HCT116 (cell line): ENCODE measurements at regions of chr3 and their contacts with region 1.

Region 1: GRCh38 chr3:192444096-192444790 is 283.1 kb downstream of the FGF12 start:
- DNase-seq: peak; percentile 36
- ATAC-seq: peak; percentile 92
- H3K4me3 ChIP-seq: no peak overlapping the region
- H3K27ac ChIP-seq: no peak overlapping the region
- H3K4me1 ChIP-seq: no peaks in the 10 kb centered on the region
- H3K27me3 ChIP-seq: peaks cover 64% of the 10 kb centered on the region
- CTCF ChIP-seq: peak; percentile 71 to 99 (median 93)
- POLR2A ChIP-seq: no peak
- RAD21 ChIP-seq: peak; percentile 93

Region 2: GRCh38 chr3:191244242-191244867 is 1199.9 kb before region 1 on chr3:
- CTCF ChIA-PET with region 1: interaction called, 4 read pairs
- POLR2A ChIA-PET with region 1: no interaction called
- RAD21 ChIA-PET with region 1: no interaction called
- intact Hi-C with region 1: loop called (anchors 10 kb)
- DNase-seq: no peak
- ATAC-seq: no peak
- H3K4me3 ChIP-seq: no peak overlapping the region
- H3K27ac ChIP-seq: no peak overlapping the region
- H3K4me1 ChIP-seq: peaks cover 7 to 20% of the 10 kb centered on the region in 2 experiments
- H3K27me3 ChIP-seq: no peaks in the 10 kb centered on the region
- CTCF ChIP-seq: peak; percentile 25 to 45 (median 26); a peak in 4 of 6 replicates
- POLR2A ChIP-seq: no peak
- RAD21 ChIP-seq: peak; percentile 60

Region 3: GRCh38 chr3:191499307-191500080 is 944.7 kb before region 1 on chr3:
- CTCF ChIA-PET with region 1: interaction called, 7 read pairs
- POLR2A ChIA-PET with region 1: no interaction called
- RAD21 ChIA-PET with region 1: no interaction called
- intact Hi-C with region 1: loop called (anchors 5 kb)
- DNase-seq: no peak
- ATAC-seq: no peak
- H3K4me3 ChIP-seq: no peak overlapping the region
- H3K27ac ChIP-seq: no peak overlapping the region
- H3K4me1 ChIP-seq: no peaks in the 10 kb centered on the region
- H3K27me3 ChIP-seq: no peaks in the 10 kb centered on the region
- CTCF ChIP-seq: no peak
- POLR2A ChIP-seq: no peak
- RAD21 ChIP-seq: no peak

Region 4: DNA sequence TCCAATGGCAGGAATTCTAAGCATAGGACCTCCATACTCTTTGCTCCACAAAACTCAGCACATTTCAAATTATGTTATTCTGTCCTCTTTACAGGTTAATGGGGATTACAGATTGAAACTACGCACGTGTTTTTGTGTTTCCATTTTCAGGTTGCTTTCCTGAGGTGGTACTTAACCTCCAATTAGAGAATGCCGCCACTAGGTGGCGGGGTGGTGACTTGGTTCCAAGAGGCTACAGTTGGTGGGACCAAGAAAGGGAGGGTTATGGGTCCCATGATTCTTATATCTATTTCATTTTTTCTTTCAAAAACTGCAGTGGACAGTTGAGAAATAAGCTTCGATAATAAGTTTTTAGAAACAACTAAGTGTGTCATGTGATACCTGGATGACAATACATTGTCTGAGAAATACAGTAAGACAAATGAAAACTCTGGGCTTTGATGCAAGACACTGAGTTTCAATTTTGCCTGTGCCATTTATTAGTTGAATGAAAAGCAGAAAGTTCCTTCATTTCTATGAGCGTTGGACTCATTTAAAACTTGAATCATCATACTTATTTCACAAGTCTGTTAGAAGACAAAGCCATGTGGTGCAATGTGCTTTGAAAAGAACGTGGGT is 255.9 kb before region 1 on chr3:
- CTCF ChIA-PET with region 1: interaction called, 9 read pairs
- POLR2A ChIA-PET with region 1: no interaction called
- RAD21 ChIA-PET with region 1: no interaction called
- intact Hi-C with region 1: loop called (anchors 1 kb)
- DNase-seq: peak; percentile 47
- ATAC-seq: peak; percentile 95
- H3K4me3 ChIP-seq: no peak overlapping the region
- H3K27ac ChIP-seq: no peak overlapping the region
- H3K4me1 ChIP-seq: no peaks in the 10 kb centered on the region
- H3K27me3 ChIP-seq: no peaks in the 10 kb centered on the region
- CTCF ChIP-seq: peak; percentile 56 to 84 (median 80)
- POLR2A ChIP-seq: no peak
- RAD21 ChIP-seq: peak; percentile 57